Head of caudate nucleus (tissue), 42 donors: ENCODE measurements at regions of chr1 and their contacts with region 1.

Region 1: GRCh38 chr1:52702886-52703787 is 5.0 kb upstream of the COA7 start:
- DNase-seq: peak; percentile 83 to 98 (median 94)

Region 2: DNA sequence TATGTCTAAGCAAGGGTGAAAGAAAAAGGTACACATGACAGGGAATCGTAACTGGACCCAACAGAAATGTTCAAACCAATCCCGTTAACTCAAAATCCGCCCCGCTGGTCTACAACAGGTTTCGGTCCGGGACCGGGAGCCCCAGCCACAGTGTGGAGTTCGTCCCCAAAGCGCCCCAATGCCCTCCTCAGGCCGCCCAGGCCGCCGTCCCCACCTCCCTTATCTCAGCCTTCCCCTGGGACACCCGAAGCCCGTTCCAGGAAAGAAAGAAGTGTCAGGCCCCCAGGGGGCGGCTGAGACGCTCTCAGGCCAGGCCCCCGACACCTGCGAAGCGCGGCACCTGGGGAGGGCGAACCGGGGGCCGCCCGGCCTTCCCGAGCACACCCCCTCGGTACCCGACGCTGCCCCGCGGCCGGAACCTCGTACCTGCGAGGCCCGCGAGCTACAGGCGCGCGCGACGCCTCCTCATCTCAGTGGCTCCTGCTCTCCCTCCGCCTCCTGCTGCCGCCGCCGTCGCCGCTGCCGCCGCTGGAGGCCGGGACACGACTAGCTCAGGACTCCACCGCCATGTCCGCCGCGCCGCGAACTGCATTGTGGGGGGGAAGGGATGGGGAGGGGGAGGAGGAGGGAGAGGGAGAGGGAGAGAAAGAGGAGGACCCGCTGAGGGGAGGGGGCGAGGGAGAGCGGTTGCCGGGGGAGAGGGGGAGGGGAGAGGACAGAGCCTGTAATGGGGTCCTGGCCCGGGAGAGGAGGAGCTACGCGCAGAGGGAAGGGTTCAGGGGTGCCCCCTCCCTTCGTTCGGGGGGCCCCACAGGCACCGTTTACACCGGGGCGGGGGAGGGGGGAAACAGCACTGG is 150.4 kb before region 1 on chr1 and contains the start of gene TUT4:
- intact Hi-C with region 1: loop called (anchors 10 kb)
- DNase-seq: peak; percentile 53 to 91 (median 79)